Activated CD4-positive, alpha-beta T cell treated with anti-CD3 and anti-CD28 coated beads for 36 hours (primary cell): ENCODE measurements at regions of chr2 and their contacts with region 1.

Region 1: DNA sequence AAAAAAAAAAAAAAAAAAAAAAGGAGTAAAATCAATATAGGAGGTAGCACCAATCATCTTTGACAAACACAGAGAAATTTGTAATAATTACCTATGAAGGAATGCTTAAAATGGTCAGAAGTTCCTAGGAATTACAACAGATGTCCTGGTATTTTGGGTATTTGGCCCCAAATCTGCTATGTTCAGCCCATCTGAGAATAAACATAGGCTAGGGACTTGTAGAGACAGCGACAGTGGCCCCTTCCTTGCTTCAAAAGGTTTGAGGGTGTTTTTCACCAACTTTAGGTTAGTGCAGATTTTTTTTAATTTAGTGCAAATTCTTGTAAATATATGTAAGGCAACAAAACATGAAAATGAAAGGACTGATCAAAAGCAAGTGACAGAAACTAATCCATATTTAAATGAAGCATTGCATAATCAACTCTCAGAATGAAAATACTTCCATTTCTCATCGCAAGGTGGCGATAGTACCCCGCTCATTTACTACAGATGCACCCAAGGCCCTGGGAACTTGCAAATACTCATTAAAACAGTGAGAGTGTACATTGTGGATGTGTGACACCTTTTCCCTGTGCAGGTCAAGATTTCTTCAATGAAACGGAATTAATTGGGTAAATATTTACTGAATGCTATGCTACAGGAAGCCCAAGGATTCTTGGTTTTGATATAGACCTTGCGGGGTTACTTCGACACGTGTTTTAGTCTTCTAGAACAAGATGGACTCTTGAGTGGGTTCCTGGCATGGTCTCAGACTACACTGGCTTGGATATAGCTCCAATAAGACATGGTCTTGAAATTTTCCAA is 44.6 kb downstream of the FAM124B start:
- DNase-seq: peak; percentile 71
- ATAC-seq: peak; percentile 78
- H3K4me3 Mint-ChIP-seq: no peak overlapping the region
- H3K27ac Mint-ChIP-seq: no peak overlapping the region
- H3K4me1 Mint-ChIP-seq: no peaks in the 10 kb centered on the region
- H3K27me3 Mint-ChIP-seq: no peaks in the 10 kb centered on the region

Region 2: GRCh38 chr2:224449212-224450147 is 92.2 kb after region 1 on chr2:
- CTCF ChIA-PET with region 1: interaction called, 4 read pairs
- POLR2A ChIA-PET with region 1: no interaction called
- intact Hi-C with region 1: loop called (anchors 1 to 5 kb)
- DNase-seq: peak; percentile 29
- ATAC-seq: peak; percentile 58
- H3K4me3 Mint-ChIP-seq: no peak overlapping the region
- H3K27ac Mint-ChIP-seq: no peak overlapping the region
- H3K4me1 Mint-ChIP-seq: no peaks in the 10 kb centered on the region
- H3K27me3 Mint-ChIP-seq: peaks cover 2% of the 10 kb centered on the region

Region 3: DNA sequence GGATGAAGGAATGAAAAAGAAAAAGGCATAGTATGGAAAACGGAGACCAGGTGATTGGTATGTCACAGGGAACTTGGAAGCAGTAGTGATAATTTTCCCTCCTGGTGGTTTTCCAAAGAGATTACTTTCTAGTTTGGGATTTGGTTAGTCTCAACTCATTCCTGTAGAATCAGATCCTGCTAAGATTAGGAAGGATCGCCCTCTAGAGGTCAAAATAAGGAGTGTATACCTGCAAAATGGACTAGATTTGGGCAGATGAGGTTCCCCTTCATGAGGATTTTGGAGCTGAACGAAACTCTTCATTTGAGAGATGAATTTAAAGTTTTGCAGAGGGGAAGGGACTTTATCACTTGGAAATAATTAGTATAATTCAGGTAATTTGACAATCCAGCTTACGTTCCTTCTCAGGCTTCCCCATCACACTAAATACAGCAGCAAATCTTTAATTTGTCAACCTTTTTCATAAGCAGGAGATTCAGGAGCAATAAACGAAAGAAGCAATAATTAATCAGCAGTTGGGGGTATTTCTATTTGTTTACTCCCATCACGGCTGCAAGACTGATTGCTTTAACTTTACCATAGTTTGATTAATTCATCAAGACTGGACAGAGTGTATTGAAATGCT is 293.6 kb after region 1 on chr2:
- CTCF ChIA-PET with region 1: interaction called, 15 read pairs
- POLR2A ChIA-PET with region 1: no interaction called
- intact Hi-C with region 1: loop called (anchors 1 kb)
- DNase-seq: no peak
- ATAC-seq: peak; percentile 53
- H3K4me3 Mint-ChIP-seq: no peak overlapping the region
- H3K27ac Mint-ChIP-seq: no peak overlapping the region
- H3K4me1 Mint-ChIP-seq: no peaks in the 10 kb centered on the region
- H3K27me3 Mint-ChIP-seq: peaks cover 2% of the 10 kb centered on the region

Region 4: DNA sequence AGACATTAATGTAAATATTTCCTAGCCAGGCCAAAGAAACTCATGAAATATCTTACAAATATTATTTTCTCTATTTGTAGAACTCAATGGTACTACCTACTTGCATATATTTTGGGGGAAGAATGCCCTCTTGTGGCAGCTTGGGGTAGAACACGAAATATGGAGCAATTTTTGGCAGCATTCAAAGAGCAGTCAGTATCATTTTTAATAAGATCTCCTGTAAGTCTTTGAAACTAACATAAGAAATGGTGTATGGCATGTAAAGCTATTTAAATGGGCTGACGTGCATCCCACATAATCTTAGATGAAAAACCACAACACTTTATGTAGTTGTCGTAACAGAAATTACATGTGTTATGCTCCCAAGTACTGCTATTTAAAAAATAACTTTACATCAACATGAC is 421.2 kb after region 1 on chr2:
- CTCF ChIA-PET with region 1: interaction called, 4 read pairs
- POLR2A ChIA-PET with region 1: no interaction called
- intact Hi-C with region 1: loop called (anchors 1 kb)
- DNase-seq: peak; percentile 72
- ATAC-seq: peak; percentile 79
- H3K4me3 Mint-ChIP-seq: no peak overlapping the region
- H3K27ac Mint-ChIP-seq: peak overlapping the region; percentile 19
- H3K4me1 Mint-ChIP-seq: peaks cover 6% of the 10 kb centered on the region
- H3K27me3 Mint-ChIP-seq: no peaks in the 10 kb centered on the region